ENCODE measurements at regions of chr1 and their contacts with region 1.

Region 1: GRCh38 chr1:239898062-239898730 is 193.5 kb upstream of the FMN2 start:
- DNase-seq: peak; percentile 86
- ATAC-seq: peak; percentile 98
- H3K4me3 Mint-ChIP-seq: no peak overlapping the region
- H3K27ac Mint-ChIP-seq: no peak overlapping the region
- H3K4me1 Mint-ChIP-seq: peaks cover 2% of the 10 kb centered on the region
- H3K27me3 Mint-ChIP-seq: peaks cover 4% of the 10 kb centered on the region

Region 2: GRCh38 chr1:238252033-238252802 is 1646.0 kb before region 1 on chr1:
- CTCF ChIA-PET with region 1: no interaction called
- POLR2A ChIA-PET with region 1: no interaction called
- intact Hi-C with region 1: loop called in 1 of 2 experiments (anchors 5 kb)
- DNase-seq: peak; percentile 61
- ATAC-seq: peak; percentile 74
- H3K4me3 Mint-ChIP-seq: no peak overlapping the region
- H3K27ac Mint-ChIP-seq: no peak overlapping the region
- H3K4me1 Mint-ChIP-seq: no peaks in the 10 kb centered on the region
- H3K27me3 Mint-ChIP-seq: no peaks in the 10 kb centered on the region

Region 3: GRCh38 chr1:239575113-239575512 is 323.1 kb before region 1 on chr1:
- CTCF ChIA-PET with region 1: no interaction called
- POLR2A ChIA-PET with region 1: no interaction called
- intact Hi-C with region 1: loop called in 1 of 2 experiments (anchors 10 kb)
- DNase-seq: no peak
- ATAC-seq: peak; percentile 74
- H3K4me3 Mint-ChIP-seq: no peak overlapping the region
- H3K27ac Mint-ChIP-seq: no peak overlapping the region
- H3K4me1 Mint-ChIP-seq: peaks cover 6% of the 10 kb centered on the region
- H3K27me3 Mint-ChIP-seq: no peaks in the 10 kb centered on the region

Region 4: DNA sequence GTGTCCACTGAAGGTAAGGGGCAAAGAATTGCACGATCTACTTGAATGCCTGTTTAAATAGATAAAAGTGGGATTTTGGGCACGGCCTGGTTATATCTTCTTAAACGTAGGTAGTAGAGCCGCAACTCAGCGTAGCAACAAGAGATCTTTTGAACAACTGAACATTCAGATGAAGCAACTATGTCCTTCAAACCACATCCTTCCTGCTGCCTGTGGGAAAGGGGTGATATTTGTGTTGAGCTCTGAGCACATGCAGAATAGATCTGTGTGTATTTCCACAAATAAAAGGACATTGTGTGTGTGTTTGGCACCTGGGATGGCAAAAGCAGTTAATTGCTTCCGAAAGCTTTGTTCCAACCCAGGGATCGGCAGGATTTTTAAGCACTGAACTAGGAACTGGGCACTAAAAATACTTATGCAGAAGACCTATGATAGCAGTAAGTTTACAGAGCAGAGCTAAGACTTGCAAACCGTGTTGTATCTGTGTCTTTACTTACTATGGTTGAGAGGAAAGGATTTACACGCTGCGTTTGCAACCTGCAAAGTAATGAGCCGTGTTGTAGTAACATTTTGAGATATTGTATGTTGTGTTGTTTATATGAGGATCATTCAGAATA is 178.4 kb before region 1 on chr1:
- CTCF ChIA-PET with region 1: interaction called, 11 read pairs
- POLR2A ChIA-PET with region 1: no interaction called
- intact Hi-C with region 1: loop called in 1 of 2 experiments (anchors 5 kb)
- DNase-seq: peak; percentile 68
- ATAC-seq: peak; percentile 47
- H3K4me3 Mint-ChIP-seq: no peak overlapping the region
- H3K27ac Mint-ChIP-seq: peak overlapping the region; percentile 99
- H3K4me1 Mint-ChIP-seq: peaks cover 36% of the 10 kb centered on the region
- H3K27me3 Mint-ChIP-seq: no peaks in the 10 kb centered on the region

Region 5: DNA sequence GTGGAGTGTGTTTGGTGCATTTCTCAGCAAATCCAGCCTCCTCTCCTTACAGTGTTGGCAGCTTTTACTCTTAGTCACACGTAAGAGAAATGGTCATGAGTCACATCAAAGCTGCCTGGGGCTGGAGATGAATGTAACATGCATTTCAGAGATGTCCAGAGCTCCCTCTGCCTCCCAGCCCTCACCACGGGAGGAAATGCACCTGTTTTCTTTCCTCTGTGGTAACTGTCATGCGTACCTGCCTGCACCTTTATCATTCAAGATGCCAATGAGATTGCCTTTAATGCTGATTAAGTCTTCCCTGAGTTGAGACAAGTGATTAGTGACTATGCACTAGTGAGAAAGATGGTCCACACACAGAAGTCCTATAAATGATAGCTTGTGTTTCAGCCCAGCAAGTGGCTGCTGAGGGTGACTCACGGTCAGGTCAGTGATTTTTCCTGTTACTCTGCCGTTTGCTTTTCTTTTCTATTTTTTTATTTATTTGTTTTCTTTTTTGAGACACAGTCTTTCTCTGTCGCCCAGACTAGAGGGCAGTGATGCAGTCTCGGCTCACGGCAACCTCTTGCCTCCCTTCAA is 83.8 kb before region 1 on chr1:
- CTCF ChIA-PET with region 1: interaction called, 6 read pairs
- POLR2A ChIA-PET with region 1: no interaction called
- intact Hi-C with region 1: loop called in 1 of 2 experiments (anchors 5 kb)
- DNase-seq: peak; percentile 69
- ATAC-seq: peak; percentile 87
- H3K4me3 Mint-ChIP-seq: no peak overlapping the region
- H3K27ac Mint-ChIP-seq: peak overlapping the region; percentile 32
- H3K4me1 Mint-ChIP-seq: peaks cover 43% of the 10 kb centered on the region
- H3K27me3 Mint-ChIP-seq: no peaks in the 10 kb centered on the region

Measured in activated CD4-positive, alpha-beta T cell treated with anti-CD3 and anti-CD28 coated beads for 36 hours (primary cell).